Kidney (tissue), 22 donors: ENCODE measurements at regions of chr19 and their contacts with region 1.

Region 1: GRCh38 chr19:14059093-14059480 is 2.8 kb downstream of the PALM3 start:
- DNase-seq: no peak
- H3K4me3 ChIP-seq: peak overlapping the region in 1 of 3 donors; percentile 35
- H3K27ac ChIP-seq: no peak overlapping the region
- H3K4me1 ChIP-seq: peaks cover 0 to 14% (median 11%) of the 10 kb centered on the region in 3 donors
- H3K27me3 ChIP-seq: no peaks in the 10 kb centered on the region
- CTCF ChIP-seq: peak; percentile 54

Region 2: DNA sequence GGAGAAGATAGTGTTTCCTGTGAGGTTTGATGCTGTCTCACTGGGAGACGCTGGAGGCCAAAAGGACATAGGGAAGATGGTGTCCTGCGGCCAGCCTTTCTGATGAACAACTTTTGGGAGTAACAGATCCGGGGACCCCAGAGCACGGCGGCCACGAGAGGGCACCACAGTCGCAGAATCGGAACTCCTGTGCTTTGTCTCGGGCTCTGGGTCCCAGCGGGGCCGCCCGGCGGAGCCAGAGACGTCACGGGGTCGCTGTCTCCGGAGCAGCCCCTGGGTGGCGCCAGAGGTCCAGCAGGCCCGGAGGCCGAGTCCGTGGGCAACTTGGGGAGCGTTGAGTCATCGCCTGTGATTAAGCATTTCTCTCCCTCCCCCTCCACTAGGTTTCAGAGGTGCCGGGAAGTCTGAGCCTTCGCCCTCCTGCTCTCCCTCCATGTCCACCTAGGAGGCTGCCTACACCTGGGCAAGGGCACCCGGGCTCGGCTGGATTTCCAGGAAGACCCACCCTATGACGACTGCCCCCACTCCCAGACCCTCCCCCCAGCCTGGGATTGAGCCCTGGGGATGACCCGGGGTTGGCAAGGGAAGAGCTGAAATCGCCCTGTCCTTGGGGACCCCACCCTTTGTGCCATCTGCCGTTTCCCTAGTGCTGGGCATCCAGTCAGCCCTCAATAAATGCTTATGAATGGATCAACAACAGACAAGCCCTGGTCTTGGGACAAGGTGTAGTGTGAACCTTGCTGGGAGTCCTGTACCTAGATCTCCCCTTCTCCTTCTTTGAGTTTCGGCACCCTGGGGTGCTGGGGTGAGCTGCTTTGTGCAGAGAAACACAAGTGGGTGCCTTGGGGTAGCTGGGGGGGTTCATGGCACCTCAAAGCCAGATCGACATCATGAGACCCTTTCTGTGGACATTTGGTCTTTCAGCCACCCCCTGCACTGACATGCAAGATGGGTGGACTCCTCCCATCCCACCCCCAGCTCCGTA is 178.7 kb before region 1 on chr19:
- intact Hi-C with region 1: loop called (anchors 10 kb)
- DNase-seq: peak; percentile 97 to 99 (median 98)
- H3K4me3 ChIP-seq: peak overlapping the region in 1 of 3 donors; percentile 22
- H3K27ac ChIP-seq: no peak overlapping the region
- H3K4me1 ChIP-seq: peaks cover 0 to 13% (median 0%) of the 10 kb centered on the region in 3 donors
- H3K27me3 ChIP-seq: no peaks in the 10 kb centered on the region
- CTCF ChIP-seq: peak; percentile 86

Region 3: DNA sequence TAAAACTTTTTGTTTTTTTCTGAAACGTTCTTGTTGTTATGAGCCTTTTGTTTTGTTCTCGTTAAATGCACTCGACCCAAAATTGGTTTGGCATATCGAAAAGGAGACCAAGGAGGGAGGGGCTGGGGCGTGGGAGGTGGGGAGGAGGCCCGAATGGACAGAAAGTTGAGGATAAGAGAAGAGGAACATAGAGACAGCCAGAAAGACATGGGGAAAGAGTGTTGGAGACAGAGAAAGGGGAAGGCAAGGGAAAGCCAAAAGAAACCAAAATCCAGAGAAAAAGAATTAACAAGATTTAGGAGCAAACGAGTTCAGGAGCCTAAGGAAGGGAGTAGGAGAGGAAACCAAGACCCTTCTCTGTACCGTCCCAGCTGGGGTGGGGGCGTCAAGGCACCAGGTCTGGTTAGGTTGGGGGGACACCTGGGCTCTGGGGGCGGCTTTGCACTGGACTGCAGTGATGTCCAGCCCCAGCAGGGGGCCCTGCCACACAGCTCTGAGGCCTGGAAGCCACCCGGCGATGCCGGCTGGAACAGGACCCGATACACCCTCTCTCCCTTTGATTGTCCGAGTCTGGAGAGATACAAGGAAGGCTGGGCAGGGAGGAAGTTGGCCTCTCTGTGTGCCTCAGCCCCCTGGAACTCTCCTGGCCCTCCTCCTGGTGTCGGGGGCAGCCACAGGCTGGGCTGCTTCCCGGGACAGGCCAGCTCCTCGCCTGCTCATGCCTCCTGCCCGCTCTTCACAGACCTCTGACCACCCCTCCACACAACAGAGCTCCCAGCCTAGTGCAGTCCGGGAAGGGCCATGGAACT is 88.9 kb after region 1 on chr19:
- intact Hi-C with region 1: no loop called
- DNase-seq: peak; percentile 84 to 92 (median 88)
- H3K4me3 ChIP-seq: no peak overlapping the region
- H3K27ac ChIP-seq: peak overlapping the region in 1 of 2 donors; percentile 32
- H3K4me1 ChIP-seq: peaks cover 0 to 14% (median 0%) of the 10 kb centered on the region in 3 donors
- H3K27me3 ChIP-seq: no peaks in the 10 kb centered on the region
- CTCF ChIP-seq: peak; percentile 65